Head of caudate nucleus (tissue), 42 donors: ENCODE measurements at regions of chr19 and their contacts with region 1.

Region 1: GRCh38 chr19:55383789-55384577 is at the start of gene TMEM238:
- DNase-seq: peak in 41 of 42 donors; percentile 27 to 73 (median 52)

Region 2: GRCh38 chr19:55301459-55302317 is 82.3 kb before region 1 on chr19:
- intact Hi-C with region 1: loop called (anchors 5 kb)
- DNase-seq: peak; percentile 77 to 96 (median 90)

Region 3: DNA sequence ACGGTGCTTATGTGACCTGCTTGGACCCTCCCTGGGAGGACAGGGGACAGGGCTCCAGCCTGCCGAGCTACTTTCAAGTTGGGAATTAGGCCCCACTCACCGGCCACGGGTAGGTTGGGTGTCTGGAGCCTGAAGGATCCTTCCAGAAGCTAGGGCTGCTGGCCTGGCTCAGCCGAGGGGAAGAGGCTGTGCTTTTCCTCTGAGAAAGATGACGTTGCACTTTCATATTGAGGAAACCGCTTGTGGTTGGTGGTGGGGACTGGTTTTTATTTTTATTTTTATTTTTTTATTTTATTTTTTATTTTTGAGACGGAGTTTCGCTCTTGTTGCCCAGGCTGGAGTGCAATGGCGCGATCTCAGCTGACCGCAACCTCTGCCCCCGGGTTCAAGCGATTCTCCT is 58.8 kb before region 1 on chr19 and contains the start of gene TMEM150B:
- intact Hi-C with region 1: no loop called
- DNase-seq: peak in 8 of 42 donors; percentile 15 to 47 (median 32)